CD14-positive monocyte (primary cell): ENCODE measurements at regions of chr4 and their contacts with region 1.

Region 1: DNA sequence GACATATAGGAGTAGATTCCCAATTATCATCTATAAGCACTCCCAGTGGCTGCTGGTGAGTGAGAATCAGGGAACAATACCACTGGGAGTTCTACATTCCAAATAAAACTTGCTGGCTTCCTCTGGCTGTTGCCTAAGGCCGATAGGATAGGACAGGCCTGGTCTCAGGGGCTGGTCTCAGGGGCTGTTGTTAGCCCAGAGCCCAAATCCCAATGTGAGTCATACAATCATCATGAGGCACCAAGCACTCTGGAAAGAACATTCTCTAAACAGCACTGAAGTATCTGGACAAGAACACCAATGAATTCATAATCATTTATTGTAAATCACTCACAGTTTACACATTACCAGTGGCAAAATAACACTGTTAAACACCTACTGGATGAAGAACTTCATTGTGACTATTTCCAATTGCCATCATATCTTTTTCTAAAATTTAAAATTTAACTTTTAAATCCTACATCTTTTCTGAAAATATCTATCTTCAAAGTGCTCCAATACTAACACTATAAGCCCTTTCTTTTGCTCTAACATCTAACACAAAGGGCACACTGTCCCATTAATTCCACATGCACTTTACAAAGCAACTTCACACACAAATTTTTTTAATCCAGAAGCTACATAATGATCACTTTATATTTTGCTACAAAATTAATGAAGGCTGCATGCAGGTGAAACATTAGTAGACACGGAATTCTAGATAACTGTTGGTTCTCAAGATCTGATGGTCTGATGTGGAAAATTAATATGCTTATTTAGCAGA is 67.6 kb upstream of the TMEM150C start:
- DNase-seq: no peak
- H3K4me3 ChIP-seq: no peak overlapping the region
- H3K4me3 Mint-ChIP-seq: no peak overlapping the region
- H3K27ac ChIP-seq: no peak overlapping the region
- H3K27ac Mint-ChIP-seq: no peak overlapping the region
- H3K4me1 ChIP-seq: no peaks in the 10 kb centered on the region
- H3K4me1 Mint-ChIP-seq: no peaks in the 10 kb centered on the region
- H3K27me3 ChIP-seq: no peaks in the 10 kb centered on the region
- H3K27me3 Mint-ChIP-seq: peaks cover 0 to 2% (median 0%) of the 10 kb centered on the region in 3 donors
- CTCF ChIP-seq: no peak

Region 2: GRCh38 chr4:82706349-82707000 is 77.1 kb after region 1 on chr4:
- intact Hi-C with region 1: loop called in 1 of 2 experiments (anchors 10 kb)
- DNase-seq: no peak
- H3K4me3 ChIP-seq: no peak overlapping the region
- H3K4me3 Mint-ChIP-seq: no peak overlapping the region
- H3K27ac ChIP-seq: no peak overlapping the region
- H3K27ac Mint-ChIP-seq: no peak overlapping the region
- H3K4me1 ChIP-seq: no peaks in the 10 kb centered on the region
- H3K4me1 Mint-ChIP-seq: no peaks in the 10 kb centered on the region
- H3K27me3 ChIP-seq: no peaks in the 10 kb centered on the region
- H3K27me3 Mint-ChIP-seq: peaks cover 0 to 4% (median 0%) of the 10 kb centered on the region in 3 donors
- CTCF ChIP-seq: no peak

Region 3: GRCh38 chr4:82865592-82865991 is 236.2 kb after region 1 on chr4:
- intact Hi-C with region 1: no loop called
- DNase-seq: peak; percentile 81 to 95 (median 91)
- H3K4me3 ChIP-seq: no peak overlapping the region
- H3K4me3 Mint-ChIP-seq: no peak overlapping the region
- H3K27ac ChIP-seq: peak overlapping the region; percentile 76 to 79
- H3K27ac Mint-ChIP-seq: peak overlapping the region; percentile 90 to 97 (median 95)
- H3K4me1 ChIP-seq: peaks cover 7 to 11% of the 10 kb centered on the region in 2 donors
- H3K4me1 Mint-ChIP-seq: peaks cover 14% of the 10 kb centered on the region
- H3K27me3 ChIP-seq: no peaks in the 10 kb centered on the region
- H3K27me3 Mint-ChIP-seq: peaks cover 0 to 1% (median 0%) of the 10 kb centered on the region in 3 donors
- CTCF ChIP-seq: no peak